A549 (cell line): ENCODE measurements at regions of chr20 and their contacts with region 1.

Region 1: GRCh38 chr20:34129518-34130162 is 17.6 kb upstream of the EIF2S2 start:
- DNase-seq: peak; percentile 60 to 77
- ATAC-seq: peak; percentile 98
- H3K4me3 ChIP-seq: peak overlapping the region; percentile 14; the same call in 2 of the 3 replicates
- H3K27ac ChIP-seq: no peak overlapping the region
- H3K4me1 ChIP-seq: peaks cover 3% of the 10 kb centered on the region; the same call in 2 of the 3 replicates
- CTCF ChIP-seq: peak; percentile 92
- EP300 ChIP-seq: no peak
- POLR2A ChIP-seq: no peak
- RAD21 ChIP-seq: peak; percentile 92 to 93

Region 2: GRCh38 chr20:33862709-33863403 is 266.8 kb before region 1 on chr20:
- CTCF ChIA-PET with region 1: interaction called, 22 read pairs
- POLR2A ChIA-PET with region 1: no interaction called
- DNase-seq: peak; percentile 32 to 55
- ATAC-seq: peak; percentile 52 to 79; a peak in 5 of 6 replicates
- H3K4me3 ChIP-seq: no peak overlapping the region
- H3K27ac ChIP-seq: peak overlapping the region; percentile 14 to 52; a peak in 3 of 6 replicates
- H3K4me1 ChIP-seq: peaks cover 18% of the 10 kb centered on the region
- CTCF ChIP-seq: peak; percentile 57
- EP300 ChIP-seq: no peak
- POLR2A ChIP-seq: no peak
- RAD21 ChIP-seq: peak; percentile 64 to 76

Region 3: GRCh38 chr20:34143951-34144350 is 14.3 kb after region 1 on chr20:
- CTCF ChIA-PET with region 1: interaction called, 10 read pairs
- POLR2A ChIA-PET with region 1: no interaction called
- DNase-seq: peak in 1 of 2 experiments; percentile 9
- ATAC-seq: peak; percentile 40 to 67; a peak in 1 of 6 replicates
- H3K4me3 ChIP-seq: no peak overlapping the region
- H3K27ac ChIP-seq: no peak overlapping the region
- H3K4me1 ChIP-seq: no peaks in the 10 kb centered on the region
- CTCF ChIP-seq: no peak
- EP300 ChIP-seq: no peak
- POLR2A ChIP-seq: no peak
- RAD21 ChIP-seq: no peak

Region 4: DNA sequence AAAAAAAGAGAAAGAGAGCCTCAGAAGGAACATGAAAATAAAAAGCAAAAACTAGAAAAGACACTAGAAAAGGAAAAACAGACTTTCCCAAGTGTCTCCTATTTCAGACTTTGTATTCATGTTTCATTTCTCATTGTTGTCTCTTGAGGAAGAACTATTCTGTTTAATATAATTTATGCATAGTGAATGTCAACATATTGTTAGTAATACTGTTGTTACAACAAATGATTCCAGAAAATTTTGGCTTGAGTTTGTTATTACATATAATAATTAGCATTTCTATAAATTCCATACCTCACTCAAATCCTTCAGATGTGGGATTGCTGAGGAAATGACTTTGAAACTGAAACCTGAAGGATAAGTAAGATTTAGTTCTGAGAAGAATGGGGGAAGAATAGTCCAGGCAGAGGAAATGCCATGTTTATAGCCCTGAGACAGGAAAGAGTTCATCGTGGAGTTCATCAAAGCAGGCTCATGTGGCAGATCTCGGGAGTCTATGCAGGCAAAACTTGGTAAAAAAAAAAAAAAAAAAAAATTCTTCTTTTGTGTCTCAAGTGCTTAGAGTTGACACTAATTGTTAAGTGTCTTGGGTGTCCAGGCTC is 35.5 kb after region 1 on chr20:
- CTCF ChIA-PET with region 1: no interaction called
- POLR2A ChIA-PET with region 1: no interaction called
- DNase-seq: no peak
- ATAC-seq: no peak; a peak in 1 of 6 replicates
- H3K4me3 ChIP-seq: no peak overlapping the region
- H3K27ac ChIP-seq: no peak overlapping the region
- H3K4me1 ChIP-seq: no peaks in the 10 kb centered on the region
- CTCF ChIP-seq: no peak
- EP300 ChIP-seq: no peak
- POLR2A ChIP-seq: no peak
- RAD21 ChIP-seq: no peak